ENCODE measurements at regions of chr9 and their contacts with region 1.

Region 1: GRCh38 chr9:128881901-128882681 is at the starts of genes KYAT1 and LRRC8A:
- DNase-seq: peak; percentile 100
- H3K4me3 Mint-ChIP-seq: peak within 1 kb of the TSS; percentile 97
- H3K27ac Mint-ChIP-seq: peak within 1 kb of the TSS; percentile 95
- H3K4me1 Mint-ChIP-seq: peaks cover 51% of the 10 kb centered on the region
- H3K27me3 Mint-ChIP-seq: no peaks in the 10 kb centered on the region
- total RNA-seq, gene KYAT1: 11.7 and 14.4 TPM in 2 replicates
- total RNA-seq, gene LRRC8A: 27.7 and 28.4 TPM in 2 replicates

Region 2: GRCh38 chr9:128322404-128323211 is 559.5 kb before region 1 on chr9 and contains the starts of genes COQ4 and TRUB2:
- intact Hi-C with region 1: loop called (anchors 2 kb)
- DNase-seq: peak; percentile 98
- H3K4me3 Mint-ChIP-seq: peak within 1 kb of the TSS; percentile 91
- H3K27ac Mint-ChIP-seq: peak within 1 kb of the TSS; percentile 97
- H3K4me1 Mint-ChIP-seq: peaks cover 9% of the 10 kb centered on the region
- H3K27me3 Mint-ChIP-seq: no peaks in the 10 kb centered on the region
- total RNA-seq, gene COQ4: 60.7 and 61.4 TPM in 2 replicates
- total RNA-seq, gene TRUB2: 40.4 and 43.0 TPM in 2 replicates

Region 3: GRCh38 chr9:128656416-128657343 is 225.4 kb before region 1 on chr9 and contains the start of gene DYNC2I2:
- intact Hi-C with region 1: loop called (anchors 2 kb)
- DNase-seq: peak; percentile 99
- H3K4me3 Mint-ChIP-seq: peak within 1 kb of the TSS; percentile 90
- H3K27ac Mint-ChIP-seq: peak within 1 kb of the TSS; percentile 100
- H3K4me1 Mint-ChIP-seq: peaks cover 10% of the 10 kb centered on the region
- H3K27me3 Mint-ChIP-seq: no peaks in the 10 kb centered on the region
- total RNA-seq, gene DYNC2I2: 47.4 and 47.7 TPM in 2 replicates

Region 4: GRCh38 chr9:128786681-128787601 is 95.2 kb before region 1 on chr9 and contains the start of gene TBC1D13:
- intact Hi-C with region 1: loop called (anchors 1 kb)
- DNase-seq: peak; percentile 97
- H3K4me3 Mint-ChIP-seq: peak within 1 kb of the TSS; percentile 95
- H3K27ac Mint-ChIP-seq: peak within 1 kb of the TSS; percentile 91
- H3K4me1 Mint-ChIP-seq: peaks cover 19% of the 10 kb centered on the region
- H3K27me3 Mint-ChIP-seq: no peaks in the 10 kb centered on the region
- total RNA-seq, gene TBC1D13: 19.2 and 19.9 TPM in 2 replicates

Region 5: GRCh38 chr9:128845155-128845931 is 36.7 kb before region 1 on chr9:
- intact Hi-C with region 1: no loop called
- DNase-seq: no peak
- H3K4me3 Mint-ChIP-seq: no peak overlapping the region
- H3K27ac Mint-ChIP-seq: no peak overlapping the region
- H3K4me1 Mint-ChIP-seq: no peaks in the 10 kb centered on the region
- H3K27me3 Mint-ChIP-seq: no peaks in the 10 kb centered on the region

Region 6: GRCh38 chr9:128902351-128903078 is 20.4 kb after region 1 on chr9:
- intact Hi-C with region 1: loop called (anchors 1 kb)
- DNase-seq: peak; percentile 95
- H3K4me3 Mint-ChIP-seq: peak overlapping the region; percentile 76
- H3K27ac Mint-ChIP-seq: peak overlapping the region; percentile 89
- H3K4me1 Mint-ChIP-seq: peaks cover 57% of the 10 kb centered on the region
- H3K27me3 Mint-ChIP-seq: no peaks in the 10 kb centered on the region

Region 7: GRCh38 chr9:128947422-128948301 is 65.6 kb after region 1 on chr9 and contains the starts of genes DOLK and NUP188:
- intact Hi-C with region 1: loop called (anchors 1 kb)
- DNase-seq: peak; percentile 100
- H3K4me3 Mint-ChIP-seq: peak within 1 kb of the TSS; percentile 92
- H3K27ac Mint-ChIP-seq: peak within 1 kb of the TSS; percentile 99
- H3K4me1 Mint-ChIP-seq: peaks cover 33% of the 10 kb centered on the region
- H3K27me3 Mint-ChIP-seq: no peaks in the 10 kb centered on the region
- total RNA-seq, gene DOLK: 15.2 and 15.9 TPM in 2 replicates
- total RNA-seq, gene NUP188: 162 and 176 TPM in 2 replicates

Region 8: DNA sequence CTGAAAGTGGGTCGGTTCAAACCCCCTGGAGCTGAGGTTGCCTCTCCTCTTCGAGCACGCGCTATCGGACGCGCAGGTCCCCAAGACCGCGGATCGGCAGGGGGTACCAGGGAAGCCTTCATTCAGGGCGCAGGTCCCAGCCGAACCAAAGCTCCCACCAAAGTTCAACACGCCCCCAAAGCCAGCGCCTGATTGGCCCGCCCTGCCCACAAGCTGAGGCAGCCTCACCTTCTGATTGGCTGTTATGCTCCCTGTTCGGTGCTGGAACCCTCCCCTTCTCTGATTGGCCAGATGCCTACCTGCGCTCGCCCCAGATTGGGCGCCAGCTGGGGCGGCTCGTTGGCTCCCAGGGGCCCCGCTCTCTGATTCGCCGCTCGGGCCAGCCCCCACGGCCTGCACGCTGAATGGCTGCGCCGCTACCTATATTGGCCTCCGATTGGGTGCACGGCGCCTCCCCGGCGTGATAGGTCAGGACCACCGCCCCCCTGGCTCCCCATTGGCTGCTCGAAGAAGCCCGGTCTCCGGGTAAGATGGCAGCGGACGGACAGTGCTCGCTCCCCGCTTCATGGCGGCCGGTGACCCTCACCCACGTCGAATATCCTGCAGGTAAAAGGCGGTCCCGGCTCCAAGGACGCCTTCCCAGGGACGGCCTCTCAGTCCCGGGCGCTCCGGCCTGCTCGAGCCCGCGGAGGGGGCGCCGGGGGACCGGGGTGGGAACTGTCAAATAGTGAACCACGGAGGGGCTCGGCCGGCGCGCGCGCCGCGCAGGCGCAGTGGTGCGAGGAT is 198.7 kb after region 1 on chr9 and contains the start of gene DOLPP1:
- intact Hi-C with region 1: loop called (anchors 5 kb)
- DNase-seq: peak; percentile 100
- H3K4me3 Mint-ChIP-seq: peak within 1 kb of the TSS; percentile 95
- H3K27ac Mint-ChIP-seq: peak within 1 kb of the TSS; percentile 84
- H3K4me1 Mint-ChIP-seq: peaks cover 19% of the 10 kb centered on the region
- H3K27me3 Mint-ChIP-seq: no peaks in the 10 kb centered on the region
- total RNA-seq, gene DOLPP1: 24.7 and 24.8 TPM in 2 replicates